Astrocyte of the cerebellum (primary cell): ENCODE measurements at regions of chr5 and their contacts with region 1.

Region 1: GRCh38 chr5:128126241-128126640 is 42.7 kb downstream of the SLC12A2 start:
- DNase-seq: no peak
- H3K4me3 ChIP-seq: no peak overlapping the region
- CTCF ChIP-seq: no peak

Region 2: DNA sequence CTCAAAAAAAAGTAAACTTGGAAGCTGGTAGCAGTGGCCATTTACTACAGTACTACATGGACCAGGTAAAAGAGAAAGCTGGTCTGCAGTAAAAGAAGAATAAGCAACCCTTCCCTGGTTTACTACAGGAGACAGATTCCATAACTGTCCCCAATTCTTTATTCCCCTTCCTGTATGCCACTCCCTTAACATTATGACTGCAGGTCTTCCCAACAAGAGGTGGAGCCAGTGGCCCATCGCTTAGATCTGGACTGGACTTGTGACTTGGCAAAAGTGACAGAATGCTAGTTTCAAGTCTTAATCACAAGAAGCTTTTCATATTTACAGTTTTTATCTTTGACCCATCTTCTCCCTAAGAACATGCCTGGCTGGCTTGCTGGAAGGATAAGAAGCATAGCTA is 85.3 kb before region 1 on chr5:
- in situ Hi-C with region 1: loop called (anchors 5 kb)
- DNase-seq: no peak
- H3K4me3 ChIP-seq: no peak overlapping the region
- CTCF ChIP-seq: no peak